ENCODE measurements at regions of chr14 and their contacts with region 1.

Region 1: GRCh38 chr14:95464514-95464913 is 51.9 kb downstream of the SYNE3 start:
- DNase-seq: no peak
- ATAC-seq: no peak
- H3K4me3 ChIP-seq: no peak overlapping the region
- H3K27ac ChIP-seq: no peak overlapping the region
- H3K4me1 ChIP-seq: no peaks in the 10 kb centered on the region; the same call in 1 of the 2 replicates
- H3K27me3 ChIP-seq: no peaks in the 10 kb centered on the region
- CTCF ChIP-seq: no peak

Region 2: DNA sequence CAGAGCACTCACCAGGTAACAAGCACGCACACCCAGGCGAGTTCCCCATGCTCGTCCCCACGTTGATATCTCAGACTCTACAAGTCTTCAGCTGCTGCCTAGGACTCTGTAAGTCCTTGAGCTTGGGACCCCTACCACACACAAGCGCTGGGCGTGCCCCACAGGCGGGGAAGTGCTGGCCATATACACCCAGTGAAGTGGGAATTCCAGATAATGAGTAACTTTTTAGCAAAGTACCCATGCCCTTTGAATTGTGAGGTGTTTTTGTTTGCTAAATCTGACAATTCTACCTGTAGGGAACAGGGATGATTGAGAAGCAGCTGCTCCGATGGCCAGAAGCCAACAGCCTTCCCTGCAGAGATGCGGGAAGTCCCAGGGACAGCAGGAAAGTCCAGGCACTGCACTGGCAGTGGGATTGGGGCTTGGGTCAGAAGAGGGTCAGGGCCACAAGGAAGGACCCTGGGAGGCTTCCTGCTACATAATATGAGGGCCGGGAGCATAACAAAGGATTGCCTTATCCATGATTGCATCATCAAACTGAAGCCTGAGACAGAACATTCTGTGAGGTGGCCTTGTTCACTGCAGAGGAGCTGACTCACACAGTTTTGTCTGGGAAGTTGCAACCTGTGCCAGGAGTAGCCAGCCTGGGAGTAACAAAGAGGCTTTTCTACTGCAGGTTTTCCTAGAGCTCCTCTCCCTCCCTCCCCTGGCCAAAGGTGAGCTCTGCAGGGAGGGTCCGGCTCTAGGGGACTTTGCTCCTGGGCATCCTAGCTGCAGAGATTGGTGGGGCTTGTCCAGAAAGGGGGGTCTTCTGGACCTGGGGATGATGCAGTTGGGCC is 865.5 kb before region 1 on chr14:
- CTCF ChIA-PET with region 1: interaction called, 14 read pairs
- POLR2A ChIA-PET with region 1: no interaction called
- in situ Hi-C with region 1: no loop called
- intact Hi-C with region 1: no loop called
- DNase-seq: no peak
- ATAC-seq: peak; percentile 94
- H3K4me3 ChIP-seq: no peak overlapping the region
- H3K27ac ChIP-seq: peak overlapping the region; percentile 82
- H3K4me1 ChIP-seq: peaks cover 32% of the 10 kb centered on the region
- H3K27me3 ChIP-seq: no peaks in the 10 kb centered on the region
- CTCF ChIP-seq: no peak

Region 3: GRCh38 chr14:95442633-95443021 is 21.9 kb before region 1 on chr14:
- CTCF ChIA-PET with region 1: no interaction called
- POLR2A ChIA-PET with region 1: no interaction called
- in situ Hi-C with region 1: no loop called
- intact Hi-C with region 1: no loop called
- DNase-seq: peak; percentile 51
- ATAC-seq: peak; percentile 98
- H3K4me3 ChIP-seq: no peak overlapping the region
- H3K27ac ChIP-seq: no peak overlapping the region
- H3K4me1 ChIP-seq: no peaks in the 10 kb centered on the region
- H3K27me3 ChIP-seq: no peaks in the 10 kb centered on the region
- CTCF ChIP-seq: peak; percentile 87

Region 4: DNA sequence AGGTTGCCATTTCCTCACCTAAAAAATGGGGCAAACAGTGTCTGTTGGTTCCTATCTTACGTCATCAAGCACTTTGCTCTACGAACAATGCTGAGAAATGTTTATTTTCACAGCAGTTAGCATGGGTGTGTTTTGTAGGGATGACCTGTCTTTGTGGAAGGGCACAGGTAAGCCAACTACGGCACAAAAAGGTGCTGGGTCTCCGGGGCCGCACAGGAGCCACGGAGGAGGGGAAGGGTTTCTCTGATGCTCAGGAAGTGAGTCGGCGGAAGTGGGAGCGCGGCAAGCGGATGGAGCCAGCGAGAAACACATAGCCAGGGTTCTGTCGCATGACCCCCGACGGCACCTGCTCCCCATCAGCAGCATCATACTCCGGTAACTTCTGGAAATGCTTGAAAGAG is 156.1 kb after region 1 on chr14:
- CTCF ChIA-PET with region 1: no interaction called
- POLR2A ChIA-PET with region 1: no interaction called
- in situ Hi-C with region 1: no loop called
- intact Hi-C with region 1: no loop called
- DNase-seq: no peak
- ATAC-seq: no peak
- H3K4me3 ChIP-seq: no peak overlapping the region
- H3K27ac ChIP-seq: no peak overlapping the region
- H3K4me1 ChIP-seq: no peaks in the 10 kb centered on the region
- H3K27me3 ChIP-seq: no peaks in the 10 kb centered on the region
- CTCF ChIP-seq: no peak

Measured in Panc1 (cell line).